Transverse colon (tissue), 4 donors: ENCODE measurements at regions of chr11 and their contacts with region 1.

Region 1: GRCh38 chr11:406978-407739 is 7.6 kb downstream of the SIGIRR start:
- DNase-seq: peak; percentile 89
- H3K4me3 ChIP-seq: peak overlapping the region; percentile 45 to 55 (median 48)
- H3K27ac ChIP-seq: peak overlapping the region; percentile 78 to 88 (median 86)
- H3K4me1 ChIP-seq: peaks cover 8 to 22% (median 17%) of the 10 kb centered on the region in 4 donors
- H3K27me3 ChIP-seq: peaks cover 3% of the 10 kb centered on the region
- CTCF ChIP-seq: peak in 1 of 5 experiments; percentile 6
- EP300 ChIP-seq: no peak
- POLR2A ChIP-seq: no peak

Region 2: GRCh38 chr11:506238-506994 is 99.3 kb after region 1 on chr11:
- in situ Hi-C with region 1: no loop called
- intact Hi-C with region 1: loop called (anchors 10 kb)
- DNase-seq: peak; percentile 98
- H3K4me3 ChIP-seq: peak overlapping the region; percentile 52 to 87 (median 86)
- H3K27ac ChIP-seq: peak overlapping the region; percentile 94 to 100 (median 99)
- H3K4me1 ChIP-seq: peaks cover 24 to 51% (median 42%) of the 10 kb centered on the region in 4 donors
- H3K27me3 ChIP-seq: no peaks in the 10 kb centered on the region
- CTCF ChIP-seq: peak in 2 of 5 experiments; percentile 24 to 30
- EP300 ChIP-seq: peak; percentile 64
- POLR2A ChIP-seq: peak; percentile 82